ENCODE measurements at regions of chr11 and their contacts with region 1.

Region 1: GRCh38 chr11:57345555-57346211 is 7.5 kb downstream of the P2RX3 start:
- DNase-seq: peak; percentile 85 to 89
- H3K4me3 ChIP-seq: no peak overlapping the region
- H3K27ac ChIP-seq: no peak overlapping the region
- H3K4me1 ChIP-seq: peaks cover 0 to 14% (median 13%) of the 10 kb centered on the region in 4 donors
- H3K27me3 ChIP-seq: no peaks in the 10 kb centered on the region
- CTCF ChIP-seq: peak in 5 of 7 experiments; percentile 66 to 87 (median 82)
- EP300 ChIP-seq: no peak
- POLR2A ChIP-seq: no peak

Region 2: GRCh38 chr11:56876621-56877275 is 468.9 kb before region 1 on chr11:
- intact Hi-C with region 1: no loop called
- DNase-seq: peak in 1 of 2 donors; percentile 26
- H3K4me3 ChIP-seq: no peak overlapping the region
- H3K27ac ChIP-seq: peak overlapping the region in 4 of 5 donors; percentile 29 to 72 (median 40)
- H3K4me1 ChIP-seq: peaks cover 0 to 23% (median 4%) of the 10 kb centered on the region in 4 donors
- H3K27me3 ChIP-seq: no peaks in the 10 kb centered on the region
- CTCF ChIP-seq: no peak
- EP300 ChIP-seq: no peak
- POLR2A ChIP-seq: no peak

Region 3: GRCh38 chr11:57294605-57295131 is 51.0 kb before region 1 on chr11:
- intact Hi-C with region 1: no loop called
- DNase-seq: peak; percentile 75 to 81
- H3K4me3 ChIP-seq: no peak overlapping the region
- H3K27ac ChIP-seq: peak overlapping the region; percentile 55 to 67 (median 60)
- H3K4me1 ChIP-seq: peaks cover 23 to 33% (median 30%) of the 10 kb centered on the region in 4 donors
- H3K27me3 ChIP-seq: no peaks in the 10 kb centered on the region
- CTCF ChIP-seq: no peak
- EP300 ChIP-seq: no peak
- POLR2A ChIP-seq: no peak

Region 4: DNA sequence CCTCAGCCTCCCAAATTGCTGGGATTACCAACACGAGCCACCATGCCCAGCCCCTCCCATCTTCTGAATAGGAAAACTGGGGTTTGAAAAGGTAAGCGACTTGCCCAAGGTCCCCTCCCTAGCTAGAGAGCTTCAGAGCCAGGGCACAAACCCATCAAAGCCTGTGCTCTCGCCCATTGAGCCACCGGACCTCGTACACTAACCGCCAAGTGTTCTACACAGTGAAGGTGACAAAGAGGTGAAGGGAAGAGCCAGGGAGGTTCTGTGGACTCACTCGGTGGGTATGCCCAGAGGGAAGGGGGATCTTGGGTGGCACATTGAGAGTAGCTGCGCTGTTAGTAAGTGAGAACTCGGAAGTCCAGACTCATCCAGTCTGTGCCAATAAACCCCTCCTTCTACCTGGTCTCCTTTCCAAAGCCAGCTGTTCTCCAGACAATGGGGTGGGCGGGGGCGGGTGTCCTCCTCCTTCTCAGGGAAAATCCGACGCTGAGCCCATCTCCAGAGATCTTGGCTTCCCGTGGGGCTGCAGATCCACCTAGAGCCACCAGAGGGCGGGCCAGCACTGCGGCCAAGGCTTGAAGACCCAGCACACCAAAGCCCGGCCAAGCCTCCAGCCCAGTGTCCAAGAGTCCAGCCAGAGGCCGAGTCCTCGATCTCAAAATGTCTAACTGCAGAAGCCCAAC is 111.4 kb after region 1 on chr11:
- intact Hi-C with region 1: loop called (anchors 10 kb)
- DNase-seq: peak; percentile 94
- H3K4me3 ChIP-seq: peak overlapping the region in 1 of 4 donors; percentile 57
- H3K27ac ChIP-seq: no peak overlapping the region
- H3K4me1 ChIP-seq: peaks cover 36 to 49% (median 43%) of the 10 kb centered on the region in 4 donors
- H3K27me3 ChIP-seq: peaks cover 4 to 55% (median 36%) of the 10 kb centered on the region in 3 donors
- CTCF ChIP-seq: peak in 5 of 7 experiments; percentile 89 to 100 (median 98)
- EP300 ChIP-seq: no peak
- POLR2A ChIP-seq: no peak

Region 5: GRCh38 chr11:57480409-57481137 is 134.9 kb after region 1 on chr11:
- intact Hi-C with region 1: loop called (anchors 10 kb)
- DNase-seq: peak; percentile 74 to 78
- H3K4me3 ChIP-seq: no peak overlapping the region
- H3K27ac ChIP-seq: no peak overlapping the region
- H3K4me1 ChIP-seq: peaks cover 32 to 65% (median 52%) of the 10 kb centered on the region in 4 donors
- H3K27me3 ChIP-seq: peaks cover 0 to 57% (median 22%) of the 10 kb centered on the region in 3 donors
- CTCF ChIP-seq: peak in 5 of 7 experiments; percentile 34 to 76 (median 61)
- EP300 ChIP-seq: no peak
- POLR2A ChIP-seq: no peak

Region 6: GRCh38 chr11:57501953-57502352 is 156.3 kb after region 1 on chr11:
- intact Hi-C with region 1: no loop called
- DNase-seq: peak; percentile 59 to 69
- H3K4me3 ChIP-seq: no peak overlapping the region
- H3K27ac ChIP-seq: peak overlapping the region; percentile 37 to 87 (median 84)
- H3K4me1 ChIP-seq: peaks cover 37 to 59% (median 47%) of the 10 kb centered on the region in 4 donors
- H3K27me3 ChIP-seq: no peaks in the 10 kb centered on the region
- CTCF ChIP-seq: no peak
- EP300 ChIP-seq: no peak
- POLR2A ChIP-seq: no peak

Region 7: GRCh38 chr11:57644748-57645688 is 299.3 kb after region 1 on chr11:
- intact Hi-C with region 1: loop called (anchors 10 kb)
- DNase-seq: peak; percentile 85 to 91
- H3K4me3 ChIP-seq: no peak overlapping the region
- H3K27ac ChIP-seq: peak overlapping the region in 3 of 5 donors; percentile 7 to 56 (median 52)
- H3K4me1 ChIP-seq: peaks cover 25 to 79% (median 67%) of the 10 kb centered on the region in 4 donors
- H3K27me3 ChIP-seq: peaks cover 12 to 53% (median 44%) of the 10 kb centered on the region in 3 donors
- CTCF ChIP-seq: peak in 5 of 7 experiments; percentile 54 to 96 (median 88)
- EP300 ChIP-seq: no peak
- POLR2A ChIP-seq: no peak

Measured in stomach (tissue), 19 donors.